GM13976 (cell line): ENCODE measurements at regions of chr16 and their contacts with region 1.

Region 1: GRCh38 chr16:66588981-66589713 is 9.9 kb downstream of the CMTM2 start:
- DNase-seq: peak; percentile 87
- CTCF ChIP-seq: peak; percentile 88

Region 2: DNA sequence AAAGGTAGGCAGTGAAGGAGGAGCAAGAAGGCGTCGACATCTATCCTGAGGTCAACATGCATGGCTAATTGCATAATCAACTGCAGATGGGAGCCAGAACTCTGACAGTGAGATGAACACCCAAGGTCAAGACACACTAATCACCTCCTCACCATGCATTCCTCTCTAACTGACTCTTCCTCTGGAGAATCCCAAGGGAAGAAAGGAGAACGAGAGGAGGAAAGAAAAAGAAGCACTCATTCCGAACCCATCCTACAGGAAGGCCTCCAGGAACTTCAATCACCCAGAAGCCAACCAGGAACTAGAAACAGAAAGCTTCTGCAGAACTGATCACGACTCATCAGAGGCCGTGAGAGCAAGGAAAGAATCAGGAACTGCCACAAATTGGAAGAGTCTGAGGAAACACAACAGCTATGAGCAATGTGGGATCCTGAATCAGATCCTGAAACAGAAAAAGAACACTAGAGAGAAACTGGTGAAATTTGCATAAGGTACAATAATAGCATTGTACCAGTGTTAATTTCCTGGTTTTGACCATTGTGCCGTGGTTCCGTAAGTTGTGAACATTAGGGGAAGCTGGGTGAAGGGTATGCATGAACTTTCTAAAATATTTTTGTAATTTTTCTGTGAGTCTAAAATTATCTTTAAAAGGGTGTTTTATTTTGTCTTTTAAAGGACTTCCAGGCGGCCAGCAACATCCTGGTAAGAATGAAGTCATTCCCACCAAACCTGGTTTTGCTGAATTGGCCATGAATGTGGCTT is 172.0 kb before region 1 on chr16:
- in situ Hi-C with region 1: loop called (anchors 10 kb)
- DNase-seq: no peak
- CTCF ChIP-seq: no peak

Region 3: GRCh38 chr16:67028555-67029248 is 439.6 kb after region 1 on chr16 and contains the start of gene CBFB:
- in situ Hi-C with region 1: no loop called
- DNase-seq: peak; percentile 98
- CTCF ChIP-seq: no peak